Gastrocnemius medialis (tissue), 4 donors: ENCODE measurements at regions of chr3 and their contacts with region 1.

Region 1: GRCh38 chr3:172218350-172219323 is 179.3 kb downstream of the FNDC3B start:
- DNase-seq: no peak
- ATAC-seq: no peak
- H3K4me3 ChIP-seq: no peak overlapping the region
- H3K27ac ChIP-seq: no peak overlapping the region
- H3K4me1 ChIP-seq: peaks cover 39 to 60% of the 10 kb centered on the region in 2 donors
- H3K27me3 ChIP-seq: no peaks in the 10 kb centered on the region
- CTCF ChIP-seq: no peak
- POLR2A ChIP-seq: no peak

Region 2: GRCh38 chr3:171809821-171810628 is 408.6 kb before region 1 on chr3 and contains the start of gene PLD1:
- in situ Hi-C with region 1: no loop called
- intact Hi-C with region 1: no loop called
- DNase-seq: peak; percentile 50 to 70
- ATAC-seq: peak; percentile 53 to 60
- H3K4me3 ChIP-seq: peak within 1 kb of the TSS; percentile 68 to 86 (median 74)
- H3K27ac ChIP-seq: peak within 1 kb of the TSS; percentile 66 to 81 (median 75)
- H3K4me1 ChIP-seq: peaks cover 6 to 11% of the 10 kb centered on the region in 2 donors
- H3K27me3 ChIP-seq: no peaks in the 10 kb centered on the region
- CTCF ChIP-seq: no peak
- POLR2A ChIP-seq: peak in 1 of 2 donors; percentile 24
- total RNA-seq, gene PLD1: 1.9 to 5.6 (median 4.6) TPM

Region 3: GRCh38 chr3:172171396-172172075 is 47.1 kb before region 1 on chr3:
- in situ Hi-C with region 1: no loop called
- intact Hi-C with region 1: loop called (anchors 5 kb)
- DNase-seq: no peak
- ATAC-seq: no peak
- H3K4me3 ChIP-seq: no peak overlapping the region
- H3K27ac ChIP-seq: peak overlapping the region in 1 of 4 donors; percentile 51
- H3K4me1 ChIP-seq: peaks cover 83 to 94% of the 10 kb centered on the region in 2 donors
- H3K27me3 ChIP-seq: no peaks in the 10 kb centered on the region
- CTCF ChIP-seq: no peak
- POLR2A ChIP-seq: no peak

Region 4: DNA sequence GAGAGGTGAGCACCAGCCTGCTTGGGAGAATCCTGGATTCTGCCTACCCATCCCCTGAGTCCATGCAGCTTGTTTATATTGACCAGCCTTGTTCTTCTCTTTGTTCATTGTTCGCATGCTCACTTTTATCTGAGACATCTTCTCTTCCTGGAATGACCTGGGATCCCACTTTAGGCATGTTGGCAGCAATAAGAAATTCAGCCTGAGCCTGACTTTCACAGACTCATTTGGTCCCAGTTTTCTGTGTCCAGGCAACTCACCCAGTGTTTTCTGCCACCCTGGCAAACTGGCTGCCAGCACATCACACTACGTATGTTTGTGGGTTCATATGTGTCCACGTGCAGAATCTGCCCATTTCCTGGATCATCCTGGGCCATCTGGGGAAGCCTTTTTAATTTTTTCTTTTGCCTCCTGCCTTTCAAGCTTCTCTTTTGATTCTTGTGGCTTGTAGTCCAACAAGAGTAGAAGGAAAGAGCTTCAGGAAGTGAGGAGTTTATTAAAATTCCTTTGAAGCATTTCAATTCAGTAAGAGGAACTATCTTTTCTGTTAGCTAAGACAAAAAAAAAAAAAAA is 20.7 kb after region 1 on chr3:
- in situ Hi-C with region 1: no loop called
- intact Hi-C with region 1: loop called (anchors 2 kb)
- DNase-seq: no peak
- ATAC-seq: no peak
- H3K4me3 ChIP-seq: no peak overlapping the region
- H3K27ac ChIP-seq: no peak overlapping the region
- H3K4me1 ChIP-seq: peaks cover 10 to 11% of the 10 kb centered on the region in 2 donors
- H3K27me3 ChIP-seq: no peaks in the 10 kb centered on the region
- CTCF ChIP-seq: no peak
- POLR2A ChIP-seq: no peak

Region 5: DNA sequence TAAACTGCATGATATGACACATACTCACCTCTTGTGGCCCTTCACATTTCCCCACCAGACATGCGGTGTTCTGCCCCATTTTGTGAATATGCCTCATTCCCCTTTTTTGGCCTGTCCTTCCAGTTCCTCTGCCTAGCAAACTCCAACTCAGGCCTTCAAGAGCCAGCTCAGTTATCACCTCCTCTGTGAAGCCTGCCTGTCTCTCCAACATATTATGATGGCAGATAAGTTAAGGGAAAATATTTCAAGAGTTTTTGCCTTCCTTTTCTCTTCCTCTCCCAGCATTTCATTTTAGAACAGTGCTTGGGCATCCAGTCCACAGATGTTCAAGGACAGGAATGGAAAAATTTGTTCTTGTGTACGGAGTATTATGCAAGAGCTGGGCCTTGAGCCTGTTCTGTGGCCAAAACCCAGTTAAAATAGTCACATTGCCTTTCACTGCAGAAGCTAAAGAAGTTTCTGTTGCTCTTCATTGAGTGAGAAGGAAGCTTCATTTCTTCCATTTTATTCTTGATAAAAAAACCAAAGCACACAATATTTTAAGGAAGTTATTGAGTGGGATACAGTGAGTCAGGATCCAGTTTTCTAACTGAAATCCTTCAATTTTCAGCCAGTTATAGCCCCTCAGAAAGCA is 37.6 kb after region 1 on chr3:
- in situ Hi-C with region 1: no loop called
- intact Hi-C with region 1: loop called (anchors 5 kb)
- DNase-seq: peak; percentile 56 to 70
- ATAC-seq: peak; percentile 93
- H3K4me3 ChIP-seq: peak overlapping the region in 1 of 4 donors; percentile 10
- H3K27ac ChIP-seq: peak overlapping the region; percentile 70 to 84 (median 76)
- H3K4me1 ChIP-seq: peaks cover 52 to 65% of the 10 kb centered on the region in 2 donors
- H3K27me3 ChIP-seq: no peaks in the 10 kb centered on the region
- CTCF ChIP-seq: no peak
- POLR2A ChIP-seq: no peak